ENCODE measurements at regions of chr1 and their contacts with region 1.

Region 1: DNA sequence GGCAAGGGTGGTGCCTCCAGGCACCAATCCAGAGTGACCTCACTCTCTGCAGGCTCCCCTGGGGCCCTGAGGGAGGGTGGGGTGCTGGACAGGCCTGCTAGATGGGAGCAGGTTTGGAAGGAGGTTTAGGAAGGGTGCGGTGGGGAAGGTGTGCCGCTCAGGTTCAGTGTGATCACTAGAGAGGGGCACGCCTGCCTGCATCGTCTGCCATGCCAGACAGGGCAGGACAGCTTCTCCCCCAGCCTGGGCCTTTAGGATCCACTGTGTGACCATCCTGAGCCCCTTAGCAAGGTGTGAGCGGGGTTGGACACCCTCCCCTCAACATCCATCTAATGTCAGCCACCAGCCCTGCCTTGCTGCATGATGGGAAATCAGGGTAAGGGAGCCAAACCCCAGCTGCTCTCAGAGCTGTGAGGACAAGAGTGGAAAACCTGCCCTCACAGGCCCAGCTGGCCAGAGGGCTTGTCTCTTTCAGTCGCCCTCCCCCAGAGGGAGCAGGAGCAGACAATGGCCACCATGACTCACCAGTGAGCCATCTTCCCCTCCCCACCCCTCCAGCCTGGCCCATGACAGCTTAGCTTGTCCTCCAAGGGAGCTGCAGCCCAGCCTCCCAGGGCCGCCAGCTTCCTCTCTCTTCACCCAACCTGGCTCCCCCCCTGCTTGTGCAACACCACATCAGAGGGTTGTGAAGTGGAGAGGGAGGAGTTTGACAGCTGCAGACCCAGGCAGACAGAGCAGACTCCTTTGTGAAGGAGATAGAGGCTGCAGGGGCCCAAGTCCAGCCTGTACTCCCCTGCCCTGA is 37.0 kb downstream of the NUAK2 start:
- DNase-seq: peak; percentile 92
- H3K4me3 ChIP-seq: peak overlapping the region; percentile 44
- H3K27ac ChIP-seq: peak overlapping the region; percentile 94
- H3K4me1 ChIP-seq: peaks cover 88% of the 10 kb centered on the region
- CTCF ChIP-seq: no peak

Region 2: GRCh38 chr1:205300886-205301821 is 16.6 kb after region 1 on chr1:
- CTCF ChIA-PET with region 1: interaction called, 4 read pairs
- POLR2A ChIA-PET with region 1: interaction called, 68 read pairs
- intact Hi-C with region 1: loop called (anchors 1 kb)
- DNase-seq: peak; percentile 92
- H3K4me3 ChIP-seq: peak overlapping the region; percentile 48
- H3K27ac ChIP-seq: peak overlapping the region; percentile 89
- H3K4me1 ChIP-seq: peaks cover 52% of the 10 kb centered on the region
- CTCF ChIP-seq: no peak

Region 3: DNA sequence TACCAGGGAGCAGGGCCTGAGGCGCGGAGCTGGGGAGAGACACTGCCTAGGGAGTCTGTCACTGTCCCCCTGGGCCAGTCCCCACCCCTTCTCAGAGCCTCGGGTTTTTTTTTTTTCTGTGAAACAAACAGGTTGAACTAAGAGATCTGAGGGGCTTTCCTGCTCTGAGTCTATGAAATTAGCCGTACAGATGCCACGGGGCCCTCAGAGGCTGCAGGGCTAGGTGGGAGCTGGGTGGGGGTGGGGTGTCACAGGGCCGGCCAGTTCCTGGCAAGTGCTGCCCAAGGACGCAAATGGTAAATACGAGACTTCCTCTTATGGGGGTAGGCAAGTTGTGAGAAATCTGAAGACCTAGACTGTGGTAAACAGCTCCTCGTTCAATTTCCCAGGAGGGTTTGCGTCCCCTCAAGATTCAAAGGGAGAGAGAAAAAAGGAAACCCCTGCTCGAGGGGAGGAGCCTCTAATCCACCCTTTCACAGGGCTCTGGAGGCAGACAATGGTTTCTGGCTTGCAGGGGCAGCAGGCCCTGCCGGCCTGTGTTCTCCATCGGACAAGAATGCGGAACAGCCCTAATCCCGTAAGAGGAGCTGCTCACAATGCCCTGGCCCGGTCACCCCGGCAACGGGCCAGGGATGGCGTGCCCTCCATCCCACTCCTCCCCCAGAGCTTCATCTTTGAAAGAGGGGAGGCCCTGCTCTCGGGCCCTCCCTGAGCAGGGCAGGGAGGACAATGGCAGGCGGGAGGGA is 29.2 kb after region 1 on chr1:
- CTCF ChIA-PET with region 1: interaction called, 13 read pairs
- POLR2A ChIA-PET with region 1: interaction called, 162 read pairs
- intact Hi-C with region 1: no loop called
- DNase-seq: peak; percentile 76
- H3K4me3 ChIP-seq: peak overlapping the region; percentile 60
- H3K27ac ChIP-seq: peak overlapping the region; percentile 66
- H3K4me1 ChIP-seq: peaks cover 83% of the 10 kb centered on the region
- CTCF ChIP-seq: no peak

Region 4: GRCh38 chr1:205321164-205321958 is 36.8 kb after region 1 on chr1 and contains the start of gene NUAK2:
- CTCF ChIA-PET with region 1: interaction called, 11 read pairs
- POLR2A ChIA-PET with region 1: interaction called, 162 read pairs
- intact Hi-C with region 1: loop called (anchors 1 kb)
- DNase-seq: peak; percentile 87
- H3K4me3 ChIP-seq: peak within 1 kb of the TSS; percentile 75
- H3K27ac ChIP-seq: peak within 1 kb of the TSS; percentile 16
- H3K4me1 ChIP-seq: peaks cover 61% of the 10 kb centered on the region
- CTCF ChIP-seq: peak; percentile 61
- total RNA-seq, gene NUAK2: 6.5 and 9.1 TPM in 2 replicates

Region 5: DNA sequence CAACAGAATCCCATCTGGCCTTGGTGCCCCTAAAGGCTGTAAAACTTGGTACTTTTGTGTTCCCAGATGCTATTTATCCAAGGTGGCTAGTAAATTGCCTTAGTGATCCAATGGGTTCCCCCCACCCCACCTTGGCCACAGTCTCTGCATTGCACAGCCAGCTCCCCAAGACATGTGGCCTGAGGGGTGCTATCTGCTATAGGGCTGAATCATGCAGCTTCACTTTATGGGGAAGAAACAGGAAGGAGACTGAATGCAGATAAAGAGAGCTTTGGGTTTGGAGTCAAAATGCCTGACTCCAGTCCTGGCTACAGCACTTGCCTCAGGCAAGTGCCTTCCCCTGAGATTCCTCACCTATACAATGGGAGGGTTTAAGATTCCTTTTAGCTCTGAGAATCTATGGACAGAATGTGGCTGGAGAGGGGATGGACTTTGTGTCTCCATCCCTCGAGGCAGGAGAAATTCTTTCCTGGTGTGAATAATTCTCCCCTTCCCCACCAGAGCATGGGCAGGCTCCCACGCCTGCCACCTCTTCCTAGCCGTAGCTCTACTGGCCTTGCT is 774.9 kb after region 1 on chr1:
- CTCF ChIA-PET with region 1: no interaction called
- POLR2A ChIA-PET with region 1: no interaction called
- intact Hi-C with region 1: loop called (anchors 5 kb)
- DNase-seq: no peak
- H3K4me3 ChIP-seq: no peak overlapping the region
- H3K27ac ChIP-seq: peak overlapping the region; percentile 98
- H3K4me1 ChIP-seq: peaks cover 57% of the 10 kb centered on the region
- CTCF ChIP-seq: no peak